Mammary epithelial cell (primary cell): ENCODE measurements at regions of chr6 and their contacts with region 1.

Region 1: GRCh38 chr6:49409951-49410542 is 53.0 kb downstream of the MMUT start:
- DNase-seq: peak; percentile 57
- H3K4me3 ChIP-seq: no peak overlapping the region
- H3K27ac ChIP-seq: no peak overlapping the region
- H3K4me1 ChIP-seq: peaks cover 5% of the 10 kb centered on the region
- H3K27me3 ChIP-seq: no peaks in the 10 kb centered on the region
- CTCF ChIP-seq: peak; percentile 86 to 96

Region 2: DNA sequence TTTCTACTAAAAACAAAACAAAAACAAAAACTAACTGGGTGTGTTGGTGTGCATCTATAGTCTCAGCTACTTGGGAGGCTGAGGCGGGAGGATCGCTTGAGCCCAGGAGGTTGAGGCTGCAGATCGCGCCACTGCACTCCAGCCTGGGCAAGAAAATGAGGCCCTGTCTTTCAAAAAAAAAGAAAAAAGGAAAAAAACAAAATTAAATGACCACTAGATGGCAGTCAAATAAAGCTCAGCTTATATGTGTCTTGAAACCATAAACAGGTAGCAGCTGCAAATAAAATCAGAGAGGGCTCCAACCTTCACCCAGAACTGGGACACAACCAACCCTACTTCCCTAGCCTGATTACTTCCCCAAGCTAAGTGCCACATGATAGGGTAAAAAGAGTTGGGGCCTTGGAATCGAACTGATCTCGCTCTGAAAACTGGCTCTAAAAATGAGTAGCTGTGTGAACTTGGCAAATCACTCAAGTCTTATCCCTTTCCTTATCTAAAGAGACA is 1778.7 kb before region 1 on chr6:
- CTCF ChIA-PET with region 1: no interaction called
- dilution Hi-C with region 1: no loop called
- in situ Hi-C with region 1: no loop called
- intact Hi-C with region 1: loop called (anchors 10 kb)
- DNase-seq: peak; percentile 60
- H3K4me3 ChIP-seq: no peak overlapping the region
- H3K27ac ChIP-seq: no peak overlapping the region
- H3K4me1 ChIP-seq: peaks cover 5% of the 10 kb centered on the region
- H3K27me3 ChIP-seq: no peaks in the 10 kb centered on the region
- CTCF ChIP-seq: peak; percentile 49 to 59

Region 3: DNA sequence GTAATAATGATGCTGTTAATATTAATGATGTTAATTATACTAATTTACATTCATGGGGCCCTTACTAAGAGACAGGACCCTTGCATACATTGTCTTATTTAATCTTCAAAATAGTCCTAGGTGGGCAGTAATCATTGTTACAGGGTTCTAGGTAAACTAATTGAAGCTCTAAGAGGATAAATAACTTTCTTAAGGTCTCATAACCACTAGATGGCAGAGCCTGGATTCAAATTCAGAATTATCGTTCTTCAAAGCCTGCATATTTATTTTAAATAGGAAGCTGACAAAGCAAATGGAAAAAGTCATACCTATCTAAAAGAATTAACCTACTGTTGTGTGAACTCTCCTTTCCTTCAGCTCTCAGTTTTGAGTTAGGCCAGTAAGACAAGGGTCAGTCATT is 1322.6 kb before region 1 on chr6:
- CTCF ChIA-PET with region 1: interaction called, 8 read pairs
- dilution Hi-C with region 1: no loop called
- in situ Hi-C with region 1: no loop called
- intact Hi-C with region 1: loop called (anchors 2 kb)
- DNase-seq: no peak
- H3K4me3 ChIP-seq: no peak overlapping the region
- H3K27ac ChIP-seq: no peak overlapping the region
- H3K4me1 ChIP-seq: no peaks in the 10 kb centered on the region
- H3K27me3 ChIP-seq: no peaks in the 10 kb centered on the region
- CTCF ChIP-seq: peak; percentile 44 to 48

Region 4: DNA sequence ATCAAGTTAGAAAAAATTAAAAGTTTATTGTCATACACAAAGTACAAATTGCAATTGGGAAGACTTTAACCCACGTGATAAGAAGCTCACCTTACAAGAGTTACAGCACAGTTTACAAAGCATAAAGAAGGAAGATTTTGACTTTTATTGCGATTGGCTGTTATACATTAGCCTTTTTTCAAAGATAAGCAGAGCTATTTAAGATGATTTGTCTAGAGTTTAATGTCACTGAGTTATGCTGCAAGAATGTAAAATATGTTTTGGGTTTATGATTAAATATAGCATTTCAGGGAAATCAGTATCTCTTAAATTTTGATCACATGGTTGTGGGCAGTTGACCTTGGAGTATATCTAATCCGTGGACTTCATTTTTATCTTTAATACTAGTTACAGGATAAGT is 634.9 kb before region 1 on chr6:
- CTCF ChIA-PET with region 1: no interaction called
- dilution Hi-C with region 1: no loop called
- in situ Hi-C with region 1: loop called in 1 of 2 experiments (anchors 25 kb)
- intact Hi-C with region 1: no loop called
- DNase-seq: no peak
- H3K4me3 ChIP-seq: no peak overlapping the region
- H3K27ac ChIP-seq: no peak overlapping the region
- H3K4me1 ChIP-seq: peaks cover 14% of the 10 kb centered on the region
- H3K27me3 ChIP-seq: no peaks in the 10 kb centered on the region
- CTCF ChIP-seq: no peak

Region 5: DNA sequence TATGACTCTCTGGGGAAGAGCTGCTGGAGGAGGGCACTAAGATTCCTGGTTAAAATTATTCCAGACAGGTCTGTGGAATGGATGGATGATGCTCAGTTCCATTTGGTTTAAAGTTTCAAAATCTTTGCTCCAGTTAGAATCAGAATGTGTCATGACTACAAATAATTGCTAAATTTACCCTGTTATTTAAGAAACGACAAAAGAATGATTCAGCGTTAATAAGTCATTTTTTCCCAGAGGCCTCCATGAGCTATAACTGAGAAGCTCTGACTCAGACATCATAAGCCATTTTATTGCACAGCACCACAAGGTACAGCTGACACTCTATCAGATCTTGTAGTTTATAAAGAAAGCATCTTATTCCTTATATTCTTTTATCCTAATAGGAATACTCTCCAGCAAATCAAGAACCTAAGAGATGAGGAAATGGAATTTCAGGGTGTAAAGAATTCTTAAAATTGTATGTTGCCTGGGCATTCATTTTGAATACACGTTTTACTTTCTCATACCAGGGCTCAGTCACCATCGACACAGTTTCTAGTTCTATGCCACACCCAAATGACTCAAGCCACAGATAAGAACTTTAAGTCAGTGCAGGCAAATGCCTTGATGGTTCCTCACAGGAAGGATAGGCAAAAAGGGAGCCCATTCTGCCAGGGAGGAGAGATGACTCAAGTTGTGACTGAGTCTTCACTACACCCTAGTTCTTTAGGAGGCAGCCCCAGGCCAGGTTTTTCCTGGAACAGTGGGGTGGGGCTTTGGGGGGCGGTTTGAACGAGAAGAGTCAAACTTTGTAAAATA is 582.9 kb before region 1 on chr6:
- CTCF ChIA-PET with region 1: no interaction called
- dilution Hi-C with region 1: no loop called
- in situ Hi-C with region 1: no loop called
- intact Hi-C with region 1: loop called (anchors 1 kb)
- DNase-seq: peak; percentile 100
- H3K4me3 ChIP-seq: peak overlapping the region in 2 of 3 experiments; percentile 8 to 12
- H3K27ac ChIP-seq: peak overlapping the region; percentile 98
- H3K4me1 ChIP-seq: peaks cover 22% of the 10 kb centered on the region
- H3K27me3 ChIP-seq: no peaks in the 10 kb centered on the region
- CTCF ChIP-seq: no peak

Region 6: GRCh38 chr6:49202924-49203536 is 207.0 kb before region 1 on chr6:
- CTCF ChIA-PET with region 1: no interaction called
- dilution Hi-C with region 1: no loop called
- in situ Hi-C with region 1: no loop called
- intact Hi-C with region 1: loop called (anchors 1 kb)
- DNase-seq: peak; percentile 54
- H3K4me3 ChIP-seq: no peak overlapping the region
- H3K27ac ChIP-seq: no peak overlapping the region
- H3K4me1 ChIP-seq: no peaks in the 10 kb centered on the region
- H3K27me3 ChIP-seq: no peaks in the 10 kb centered on the region
- CTCF ChIP-seq: no peak